PC-9 (cell line): ENCODE measurements at regions of chr12 and their contacts with region 1.

Region 1: DNA sequence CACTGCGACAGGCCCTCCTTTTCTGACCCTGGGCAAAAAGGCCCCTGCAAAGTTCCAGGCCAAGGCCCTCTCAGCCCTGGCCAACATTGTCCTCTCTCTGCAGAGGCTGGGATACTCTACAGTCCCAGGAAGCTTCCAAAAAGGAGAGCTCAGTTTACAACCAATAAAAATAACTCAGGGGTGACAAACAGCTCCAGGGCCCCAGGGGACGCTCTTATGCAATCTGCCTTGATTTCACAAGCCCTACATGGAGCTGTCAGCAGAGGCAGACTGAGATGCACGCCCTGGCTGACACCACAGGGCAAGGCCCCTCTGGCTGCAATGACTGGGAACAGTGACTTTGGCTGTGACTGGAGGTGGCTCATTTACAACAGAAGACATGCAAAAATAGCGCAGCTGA is 129.0 kb upstream of the MED13L start:
- DNase-seq: peak; percentile 74 to 96
- H3K4me3 ChIP-seq: no peak overlapping the region
- H3K27ac ChIP-seq: peak overlapping the region; percentile 63
- H3K4me1 ChIP-seq: peaks cover 17% of the 10 kb centered on the region
- H3K27me3 ChIP-seq: no peaks in the 10 kb centered on the region
- CTCF ChIP-seq: no peak; the same call in 1 of the 2 replicates

Region 2: GRCh38 chr12:116277393-116278278 is 128.9 kb before region 1 on chr12 and contains the start of gene MED13L:
- CTCF ChIA-PET with region 1: no interaction called
- POLR2A ChIA-PET with region 1: no interaction called
- intact Hi-C with region 1: no loop called
- DNase-seq: peak; percentile 66 to 89
- H3K4me3 ChIP-seq: peak within 1 kb of the TSS; percentile 89
- H3K27ac ChIP-seq: peak within 1 kb of the TSS; percentile 59
- H3K4me1 ChIP-seq: peaks cover 38% of the 10 kb centered on the region
- H3K27me3 ChIP-seq: no peaks in the 10 kb centered on the region
- CTCF ChIP-seq: no peak
- total RNA-seq, gene MED13L: 89.5 and 101 TPM in 2 replicates

Region 3: DNA sequence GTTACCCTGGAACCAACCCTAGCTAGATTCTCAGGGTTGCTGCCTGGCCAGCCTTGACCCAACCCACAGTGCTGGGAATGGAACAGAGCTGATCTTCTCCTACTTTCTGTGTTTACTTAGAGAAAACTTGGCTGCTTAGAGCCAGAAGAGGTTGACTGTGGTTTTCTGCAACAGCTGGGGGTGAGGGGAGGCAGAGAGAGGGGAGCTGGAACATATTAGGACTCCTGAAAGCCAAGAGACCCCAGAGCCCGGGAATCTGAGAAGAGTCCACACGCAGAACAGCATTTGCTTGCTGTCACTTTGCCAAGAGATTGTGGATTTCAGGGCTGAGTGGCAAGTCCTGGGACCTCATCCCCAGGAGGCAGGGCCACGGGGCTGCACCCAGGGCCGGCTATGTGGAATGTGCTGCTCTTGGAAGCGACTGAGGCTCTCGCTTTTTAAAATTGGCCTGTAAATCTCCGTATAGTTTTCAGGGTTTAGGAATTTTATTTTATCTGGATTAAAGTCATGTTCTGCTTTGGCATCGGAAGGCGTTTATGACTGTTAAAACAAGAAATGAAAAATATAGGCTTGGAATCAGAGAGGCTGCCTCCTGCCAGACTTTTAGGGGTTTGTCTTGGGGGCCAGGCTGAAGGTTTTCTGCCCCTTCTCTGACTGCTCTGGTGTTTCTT is 106.7 kb before region 1 on chr12:
- CTCF ChIA-PET with region 1: no interaction called
- POLR2A ChIA-PET with region 1: interaction called, 12 read pairs
- intact Hi-C with region 1: no loop called
- DNase-seq: no peak
- H3K4me3 ChIP-seq: no peak overlapping the region
- H3K27ac ChIP-seq: no peak overlapping the region
- H3K4me1 ChIP-seq: peaks cover 10% of the 10 kb centered on the region
- H3K27me3 ChIP-seq: no peaks in the 10 kb centered on the region
- CTCF ChIP-seq: no peak

Region 4: GRCh38 chr12:116542004-116542956 is 135.8 kb after region 1 on chr12:
- CTCF ChIA-PET with region 1: interaction called, 10 read pairs
- POLR2A ChIA-PET with region 1: no interaction called
- intact Hi-C with region 1: no loop called
- DNase-seq: peak; percentile 64 to 85
- H3K4me3 ChIP-seq: no peak overlapping the region
- H3K27ac ChIP-seq: no peak overlapping the region
- H3K4me1 ChIP-seq: peaks cover 17% of the 10 kb centered on the region
- H3K27me3 ChIP-seq: no peaks in the 10 kb centered on the region
- CTCF ChIP-seq: no peak